ENCODE measurements at regions of chr16 and their contacts with region 1.

Region 1: GRCh38 chr16:20763461-20764232 is at the start of gene ACSM3:
- DNase-seq: peak in 3 of 5 donors; percentile 27 to 44 (median 37)
- ATAC-seq: peak; percentile 61 to 93 (median 90)
- H3K4me3 ChIP-seq: peak within 1 kb of the TSS in 10 of 12 donors; percentile 17 to 62 (median 44)
- H3K27ac ChIP-seq: peak within 1 kb of the TSS in 6 of 12 donors; percentile 10 to 85 (median 24)
- H3K4me1 ChIP-seq: peaks cover 0 to 13% (median 0%) of the 10 kb centered on the region in 12 donors
- H3K27me3 ChIP-seq: no peaks in the 10 kb centered on the region
- CTCF ChIP-seq: no peak
- POLR2A ChIP-seq: no peak
- total RNA-seq, gene ACSM3: 2.0 to 22.5 (median 5.0) TPM

Region 2: GRCh38 chr16:20814784-20815183 is 51.1 kb after region 1 on chr16:
- intact Hi-C with region 1: no loop called
- DNase-seq: no peak
- ATAC-seq: no peak
- H3K4me3 ChIP-seq: no peak overlapping the region
- H3K27ac ChIP-seq: no peak overlapping the region
- H3K4me1 ChIP-seq: no peaks in the 10 kb centered on the region
- H3K27me3 ChIP-seq: no peaks in the 10 kb centered on the region
- CTCF ChIP-seq: no peak
- POLR2A ChIP-seq: no peak

Region 3: GRCh38 chr16:20826039-20826566 is 62.5 kb after region 1 on chr16:
- intact Hi-C with region 1: loop called in 1 of 10 experiments (anchors 10 kb)
- DNase-seq: no peak
- ATAC-seq: no peak
- H3K4me3 ChIP-seq: no peak overlapping the region
- H3K27ac ChIP-seq: no peak overlapping the region
- H3K4me1 ChIP-seq: peaks cover 0 to 13% (median 0%) of the 10 kb centered on the region in 12 donors
- H3K27me3 ChIP-seq: no peaks in the 10 kb centered on the region
- CTCF ChIP-seq: no peak
- POLR2A ChIP-seq: no peak